ENCODE measurements at regions of chr5 and their contacts with region 1.

Region 1: GRCh38 chr5:172984243-172984953 is 827 bp downstream of the ATP6V0E1 start:
- DNase-seq: peak; percentile 43
- ATAC-seq: peak; percentile 67
- H3K4me3 ChIP-seq: peak overlapping the region; percentile 82 to 99
- H3K27ac ChIP-seq: peak overlapping the region; percentile 92
- H3K4me1 ChIP-seq: peaks cover 9% of the 10 kb centered on the region
- H3K27me3 ChIP-seq: no peaks in the 10 kb centered on the region
- CTCF ChIP-seq: no peak; the same call in 1 of the 2 replicates

Region 2: DNA sequence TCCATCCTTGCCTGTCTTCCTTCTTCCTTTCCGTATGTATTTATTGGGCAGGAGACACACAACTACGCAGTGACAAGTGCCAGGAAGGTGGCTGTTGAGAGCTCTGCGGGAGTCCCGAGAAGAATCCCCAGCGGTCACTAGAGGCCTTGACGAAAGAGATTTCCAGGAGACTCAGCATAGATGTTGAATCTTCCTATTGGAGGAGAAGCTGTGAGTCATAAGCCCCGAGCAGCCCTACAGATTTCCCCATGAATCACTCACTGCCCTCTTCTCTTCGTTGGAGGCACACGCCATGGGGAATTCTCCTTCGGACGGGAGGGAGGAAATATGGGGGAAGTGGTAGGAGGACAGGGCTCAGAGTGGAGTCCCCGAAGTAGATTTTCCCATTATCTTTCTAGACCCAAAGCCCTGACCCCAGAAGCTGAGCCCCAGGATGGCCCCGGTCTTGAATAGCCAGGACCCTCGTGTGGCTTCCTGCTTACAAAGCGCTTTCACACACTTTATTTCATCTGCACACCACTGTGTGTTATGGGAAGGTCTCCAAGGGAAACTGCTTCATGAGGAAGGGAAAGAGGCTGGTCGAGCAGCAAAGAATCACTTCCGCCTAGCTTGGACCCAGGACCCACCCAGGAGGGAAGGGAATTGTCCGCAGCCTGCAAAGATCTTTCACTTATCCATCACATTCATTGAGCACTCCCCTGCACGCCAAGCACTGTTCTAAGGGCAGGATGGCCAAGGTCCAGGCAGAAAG is 226.1 kb before region 1 on chr5:
- CTCF ChIA-PET with region 1: no interaction called
- POLR2A ChIA-PET with region 1: no interaction called
- in situ Hi-C with region 1: no loop called
- intact Hi-C with region 1: no loop called
- DNase-seq: no peak
- ATAC-seq: peak; percentile 81
- H3K4me3 ChIP-seq: no peak overlapping the region
- H3K27ac ChIP-seq: peak overlapping the region; percentile 44; the same call in 1 of the 2 replicates
- H3K4me1 ChIP-seq: peaks cover 7% of the 10 kb centered on the region
- H3K27me3 ChIP-seq: no peaks in the 10 kb centered on the region
- CTCF ChIP-seq: no peak

Region 3: DNA sequence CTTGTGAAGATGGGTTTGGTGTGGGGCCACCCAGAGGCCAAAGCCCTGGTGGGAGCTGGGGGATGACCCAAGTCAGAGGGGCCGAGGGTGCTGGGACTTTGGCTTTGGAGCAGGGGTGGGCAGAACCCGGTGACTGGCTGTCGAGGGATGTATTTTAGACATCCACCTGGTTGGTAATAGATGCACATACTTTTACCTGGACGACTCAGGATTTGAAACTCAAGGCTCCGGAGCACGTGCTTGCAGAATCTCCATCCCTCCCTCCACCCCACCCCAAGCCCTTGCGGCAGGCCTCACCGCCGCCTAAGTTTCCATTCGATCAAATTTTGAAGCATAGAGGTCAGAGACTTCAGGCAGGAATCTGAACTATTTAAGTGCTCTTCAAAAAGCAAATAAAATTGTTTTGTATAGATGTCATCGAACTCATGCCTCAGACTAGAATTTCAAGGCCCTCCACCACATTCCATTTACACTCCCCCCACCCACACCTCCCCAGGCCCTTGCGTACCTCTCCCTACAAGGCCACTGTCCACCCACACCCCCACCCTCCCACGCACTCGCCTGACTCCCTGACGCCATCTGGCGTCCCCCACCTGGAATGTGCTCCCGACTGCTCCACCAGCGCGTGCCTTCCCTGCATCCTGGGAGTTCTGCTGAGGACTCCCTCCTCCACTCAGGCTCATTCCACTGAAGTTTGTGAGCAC is 81.7 kb before region 1 on chr5:
- CTCF ChIA-PET with region 1: no interaction called
- POLR2A ChIA-PET with region 1: no interaction called
- in situ Hi-C with region 1: no loop called
- intact Hi-C with region 1: no loop called
- DNase-seq: no peak
- ATAC-seq: peak; percentile 62
- H3K4me3 ChIP-seq: no peak overlapping the region
- H3K27ac ChIP-seq: peak overlapping the region; percentile 85
- H3K4me1 ChIP-seq: peaks cover 76% of the 10 kb centered on the region
- H3K27me3 ChIP-seq: no peaks in the 10 kb centered on the region
- CTCF ChIP-seq: peak; percentile 86; the same call in 1 of the 2 replicates

Region 4: DNA sequence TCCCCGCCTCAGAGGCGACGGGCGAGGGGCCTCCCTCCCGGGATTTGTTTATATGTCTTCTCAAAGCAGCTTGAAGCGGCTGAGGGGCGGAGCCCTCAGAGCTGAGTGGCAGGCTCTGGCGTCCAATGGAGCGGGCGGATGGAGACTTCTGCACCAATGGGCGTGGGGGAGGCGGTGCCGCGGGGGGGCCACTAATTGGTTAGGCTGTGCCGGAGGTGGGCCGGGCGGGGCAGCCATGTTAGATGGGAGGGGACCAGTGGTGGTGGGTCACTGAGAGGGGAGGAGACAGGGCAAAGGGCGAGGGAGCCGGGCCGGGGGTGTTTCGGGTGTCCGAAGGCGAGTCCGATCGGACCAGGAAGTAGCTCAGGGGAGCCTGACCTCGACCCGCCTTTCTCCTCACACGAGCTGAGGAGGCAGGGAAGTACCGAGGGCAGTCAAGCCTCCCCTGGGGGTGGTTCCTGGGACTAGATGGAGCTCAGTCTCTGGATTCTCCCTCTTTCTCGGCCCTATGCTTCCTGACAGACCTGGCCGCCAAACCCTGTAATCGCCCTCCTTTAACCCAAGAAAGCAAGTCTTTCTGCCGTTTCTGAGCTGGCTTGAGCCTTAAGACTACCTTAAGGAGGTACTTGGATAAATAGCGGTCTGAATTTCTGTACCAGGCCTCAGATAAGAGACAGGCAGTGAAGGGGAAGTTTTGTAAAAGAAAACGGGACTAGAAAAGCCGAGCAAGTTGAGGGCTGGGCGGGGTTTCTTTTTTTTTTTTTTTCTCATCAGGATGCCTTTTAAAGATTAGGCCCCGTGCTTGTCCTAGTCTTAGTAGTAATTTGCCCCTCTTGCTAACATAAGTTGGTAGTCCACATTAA is 72.9 kb after region 1 on chr5:
- CTCF ChIA-PET with region 1: interaction called, 7 read pairs
- POLR2A ChIA-PET with region 1: no interaction called
- in situ Hi-C with region 1: no loop called
- intact Hi-C with region 1: loop called (anchors 10 kb)
- DNase-seq: peak; percentile 95
- ATAC-seq: peak; percentile 94
- H3K4me3 ChIP-seq: peak overlapping the region; percentile 57 to 77
- H3K27ac ChIP-seq: peak overlapping the region; percentile 94
- H3K4me1 ChIP-seq: peaks cover 14% of the 10 kb centered on the region
- H3K27me3 ChIP-seq: no peaks in the 10 kb centered on the region
- CTCF ChIP-seq: no peak

Region 5: GRCh38 chr5:173144200-173145176 is 160.1 kb after region 1 on chr5 and contains the start of gene BNIP1:
- CTCF ChIA-PET with region 1: interaction called, 3 read pairs
- POLR2A ChIA-PET with region 1: no interaction called
- in situ Hi-C with region 1: no loop called
- intact Hi-C with region 1: loop called (anchors 5 kb)
- DNase-seq: peak; percentile 86
- ATAC-seq: peak; percentile 97
- H3K4me3 ChIP-seq: peak within 1 kb of the TSS; percentile 88 to 93
- H3K27ac ChIP-seq: peak within 1 kb of the TSS; percentile 92
- H3K4me1 ChIP-seq: peaks cover 6% of the 10 kb centered on the region; the same call in 1 of the 2 replicates
- H3K27me3 ChIP-seq: no peaks in the 10 kb centered on the region
- CTCF ChIP-seq: peak; percentile 98
- total RNA-seq, gene BNIP1: 12.3 TPM